PC-3 (cell line): ENCODE measurements at regions of chr13 and their contacts with region 1.

Region 1: GRCh38 chr13:112931028-112931934 is 37.7 kb upstream of the MCF2L start:
- DNase-seq: peak; percentile 80
- ATAC-seq: peak; percentile 95
- H3K4me3 ChIP-seq: peak overlapping the region; percentile 66
- H3K27ac ChIP-seq: peak overlapping the region; percentile 14; the same call in 1 of the 2 replicates
- H3K4me1 ChIP-seq: peaks cover 5% of the 10 kb centered on the region
- H3K27me3 ChIP-seq: no peaks in the 10 kb centered on the region
- CTCF ChIP-seq: peak; percentile 80

Region 2: DNA sequence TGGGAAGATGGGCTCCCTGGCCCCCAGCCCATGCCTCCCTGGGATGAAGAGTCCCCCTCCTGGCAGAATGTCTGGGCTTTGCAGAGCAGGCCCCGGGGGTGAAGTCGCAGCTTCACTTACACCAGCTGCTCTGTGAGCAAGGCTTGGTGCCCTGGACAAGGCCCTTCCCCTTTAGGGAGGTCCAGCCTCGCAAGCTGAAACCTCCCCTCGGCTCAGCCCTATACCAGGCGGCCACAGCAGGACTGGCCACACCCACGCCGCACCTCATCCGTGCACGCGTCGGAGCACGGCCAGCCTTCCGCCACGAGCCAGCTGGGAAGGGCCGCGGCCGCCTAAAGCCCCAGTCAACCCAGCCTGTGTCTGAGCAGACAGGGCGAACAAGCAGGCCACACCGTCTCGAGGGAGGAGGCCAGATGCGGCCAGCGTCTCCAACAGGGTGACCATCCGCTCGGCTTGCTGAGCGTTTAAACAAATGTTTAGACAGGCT is 45.5 kb before region 1 on chr13:
- CTCF ChIA-PET with region 1: interaction called, 4 read pairs
- POLR2A ChIA-PET with region 1: no interaction called
- intact Hi-C with region 1: loop called (anchors 5 kb)
- DNase-seq: peak; percentile 83
- ATAC-seq: peak; percentile 100
- H3K4me3 ChIP-seq: peak overlapping the region; percentile 56; the same call in 1 of the 2 replicates
- H3K27ac ChIP-seq: no peak overlapping the region
- H3K4me1 ChIP-seq: peaks cover 6% of the 10 kb centered on the region
- H3K27me3 ChIP-seq: no peaks in the 10 kb centered on the region
- CTCF ChIP-seq: no peak

Region 3: DNA sequence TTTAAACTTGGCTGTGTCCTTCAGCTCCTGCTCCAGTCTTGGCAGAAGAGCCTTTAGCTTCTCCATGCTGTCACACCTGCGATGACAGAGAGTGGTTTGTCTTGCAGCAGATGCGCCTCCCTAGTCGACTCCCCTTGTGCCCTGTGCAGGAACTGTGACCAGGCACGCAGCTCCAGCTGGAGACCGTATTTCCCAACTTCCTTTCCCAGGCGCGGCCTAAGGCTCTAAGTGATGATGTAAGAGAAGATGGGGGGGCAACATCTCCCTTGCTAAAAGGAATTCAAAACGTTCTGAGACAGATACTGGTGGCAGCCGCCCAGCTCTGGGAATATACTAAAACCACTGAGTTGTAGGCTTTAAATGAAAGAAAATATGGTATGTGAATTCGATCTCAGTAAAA is 542.9 kb after region 1 on chr13:
- CTCF ChIA-PET with region 1: no interaction called
- POLR2A ChIA-PET with region 1: no interaction called
- intact Hi-C with region 1: no loop called
- DNase-seq: no peak
- ATAC-seq: no peak
- H3K4me3 ChIP-seq: no peak overlapping the region
- H3K27ac ChIP-seq: no peak overlapping the region
- H3K4me1 ChIP-seq: no peaks in the 10 kb centered on the region
- H3K27me3 ChIP-seq: no peaks in the 10 kb centered on the region
- CTCF ChIP-seq: no peak